Activated CD8-positive, alpha-beta T cell treated with anti-CD3 and anti-CD28 coated beads for 36 hours (primary cell): ENCODE measurements at regions of chr2 and their contacts with region 1.

Region 1: DNA sequence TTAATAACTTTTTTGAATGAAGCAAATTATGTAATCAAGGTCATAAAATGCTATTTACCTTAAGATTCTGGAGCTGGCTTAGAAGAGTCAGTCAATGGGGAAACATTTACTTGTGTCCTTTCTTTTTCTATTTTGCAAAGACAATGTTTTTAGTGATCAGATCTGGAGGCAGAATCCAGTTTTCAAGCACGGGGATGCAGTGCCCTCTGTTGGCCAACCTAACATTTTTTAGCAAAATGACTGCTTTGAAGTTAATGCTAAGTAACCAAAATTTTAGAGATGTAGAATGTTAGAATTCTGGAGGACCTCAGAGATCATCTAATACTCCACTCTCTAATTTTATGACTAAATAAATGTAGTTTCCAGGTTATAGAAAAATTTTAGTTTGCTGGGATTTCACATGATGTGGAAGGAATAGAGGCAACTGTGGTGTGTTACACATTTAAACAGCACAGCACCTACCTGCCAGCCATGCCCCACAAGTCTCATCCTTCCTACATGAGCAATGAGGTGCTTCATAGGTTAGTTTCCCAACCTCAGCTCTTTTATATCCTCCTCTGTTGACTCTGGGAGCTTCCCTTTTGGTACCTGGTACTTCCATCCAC is 23.6 kb upstream of the SLC9A4 start:
- DNase-seq: peak; percentile 75
- ATAC-seq: peak; percentile 47
- H3K4me3 Mint-ChIP-seq: no peak overlapping the region
- H3K27ac Mint-ChIP-seq: no peak overlapping the region
- H3K4me1 Mint-ChIP-seq: peaks cover 10% of the 10 kb centered on the region
- H3K27me3 Mint-ChIP-seq: no peaks in the 10 kb centered on the region
- CTCF ChIP-seq: peak; percentile 80

Region 2: GRCh38 chr2:101998896-101999789 is 450.3 kb before region 1 on chr2:
- CTCF ChIA-PET with region 1: no interaction called
- POLR2A ChIA-PET with region 1: no interaction called
- intact Hi-C with region 1: loop called (anchors 5 kb)
- DNase-seq: peak; percentile 41
- ATAC-seq: peak; percentile 66
- H3K4me3 Mint-ChIP-seq: peak overlapping the region; percentile 8
- H3K27ac Mint-ChIP-seq: peak overlapping the region; percentile 67
- H3K4me1 Mint-ChIP-seq: peaks cover 25% of the 10 kb centered on the region
- H3K27me3 Mint-ChIP-seq: no peaks in the 10 kb centered on the region
- CTCF ChIP-seq: no peak

Region 3: GRCh38 chr2:102355526-102356380 is 93.7 kb before region 1 on chr2 and contains the start of gene IL18R1:
- CTCF ChIA-PET with region 1: interaction called, 23 read pairs
- POLR2A ChIA-PET with region 1: no interaction called
- intact Hi-C with region 1: no loop called
- DNase-seq: peak; percentile 81
- ATAC-seq: peak; percentile 82
- H3K4me3 Mint-ChIP-seq: peak within 1 kb of the TSS; percentile 96
- H3K27ac Mint-ChIP-seq: peak within 1 kb of the TSS; percentile 98
- H3K4me1 Mint-ChIP-seq: peaks cover 36% of the 10 kb centered on the region
- H3K27me3 Mint-ChIP-seq: no peaks in the 10 kb centered on the region
- CTCF ChIP-seq: peak; percentile 84
- total RNA-seq, gene IL18R1: 15.0 to 15.8 TPM